Spleen (tissue), 13 donors: ENCODE measurements at regions of chr9 and their contacts with region 1.

Region 1: GRCh38 chr9:129139993-129140396 is 28.8 kb downstream of the PTPA start:
- DNase-seq: peak; percentile 91
- H3K4me3 ChIP-seq: peak overlapping the region; percentile 9 to 68 (median 40)
- H3K27ac ChIP-seq: peak overlapping the region; percentile 83 to 100 (median 98)
- H3K4me1 ChIP-seq: peaks cover 39 to 94% (median 79%) of the 10 kb centered on the region in 6 donors
- H3K27me3 ChIP-seq: no peaks in the 10 kb centered on the region
- CTCF ChIP-seq: no peak
- POLR2A ChIP-seq: peak in 1 of 3 donors; percentile 46

Region 2: DNA sequence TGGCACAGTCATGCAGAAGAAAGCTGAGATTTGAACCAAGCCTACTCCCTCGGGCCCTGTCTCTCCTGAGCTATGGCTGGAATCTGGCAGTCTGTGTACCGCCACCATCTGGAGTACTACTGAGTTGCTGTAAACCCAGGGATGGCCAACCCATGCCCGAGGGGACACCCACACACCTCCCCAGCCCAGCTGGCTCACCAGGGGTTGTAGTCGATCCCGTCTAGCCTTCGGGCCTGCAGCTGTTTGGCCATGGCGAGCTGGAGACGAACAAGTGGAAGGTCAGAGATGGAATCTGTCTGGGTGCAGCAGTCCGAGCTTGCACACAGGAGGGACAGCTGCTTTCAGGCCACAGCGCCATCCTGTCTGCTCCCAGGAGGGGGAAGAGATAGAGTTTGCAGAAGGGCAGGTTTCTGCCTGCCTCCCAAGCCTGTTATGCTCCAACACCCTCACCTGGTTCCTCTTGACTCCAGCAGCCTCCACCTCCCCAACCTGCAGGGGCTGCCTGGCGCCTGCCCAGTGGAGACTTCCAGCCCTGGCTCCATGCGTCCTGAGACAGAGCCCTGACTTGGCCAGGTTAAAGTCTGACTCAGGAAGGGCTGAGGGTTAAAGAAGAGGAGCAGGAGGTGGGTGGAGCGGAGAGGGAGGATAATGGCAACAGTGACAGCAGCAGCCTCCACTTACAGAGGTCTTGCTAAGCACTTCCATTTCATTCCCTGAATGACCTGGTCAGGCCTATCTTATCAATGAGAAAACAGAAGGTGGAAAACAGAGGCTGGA is 294.7 kb before region 1 on chr9:
- intact Hi-C with region 1: no loop called
- DNase-seq: peak; percentile 41
- H3K4me3 ChIP-seq: no peak overlapping the region
- H3K27ac ChIP-seq: no peak overlapping the region
- H3K4me1 ChIP-seq: no peaks in the 10 kb centered on the region
- H3K27me3 ChIP-seq: no peaks in the 10 kb centered on the region
- CTCF ChIP-seq: no peak
- POLR2A ChIP-seq: no peak

Region 3: GRCh38 chr9:129610473-129611301 is 470.7 kb after region 1 on chr9:
- intact Hi-C with region 1: loop called (anchors 2 kb)
- DNase-seq: peak; percentile 94
- H3K4me3 ChIP-seq: peak overlapping the region; percentile 26 to 83 (median 54)
- H3K27ac ChIP-seq: peak overlapping the region; percentile 84 to 91 (median 88)
- H3K4me1 ChIP-seq: peaks cover 25 to 73% (median 53%) of the 10 kb centered on the region in 6 donors
- H3K27me3 ChIP-seq: peaks cover 0 to 10% (median 0%) of the 10 kb centered on the region in 7 donors
- CTCF ChIP-seq: peak; percentile 72 to 98 (median 96)
- POLR2A ChIP-seq: no peak